ENCODE measurements at regions of chr9 and their contacts with region 1.

Region 1: GRCh38 chr9:69549310-69550202 is 122.6 kb downstream of the APBA1 start:
- DNase-seq: no peak
- ATAC-seq: no peak
- H3K4me3 Mint-ChIP-seq: no peak overlapping the region
- H3K27ac Mint-ChIP-seq: no peak overlapping the region
- H3K4me1 Mint-ChIP-seq: no peaks in the 10 kb centered on the region
- H3K27me3 Mint-ChIP-seq: peaks cover 6% of the 10 kb centered on the region
- CTCF ChIP-seq: peak; percentile 82

Region 2: DNA sequence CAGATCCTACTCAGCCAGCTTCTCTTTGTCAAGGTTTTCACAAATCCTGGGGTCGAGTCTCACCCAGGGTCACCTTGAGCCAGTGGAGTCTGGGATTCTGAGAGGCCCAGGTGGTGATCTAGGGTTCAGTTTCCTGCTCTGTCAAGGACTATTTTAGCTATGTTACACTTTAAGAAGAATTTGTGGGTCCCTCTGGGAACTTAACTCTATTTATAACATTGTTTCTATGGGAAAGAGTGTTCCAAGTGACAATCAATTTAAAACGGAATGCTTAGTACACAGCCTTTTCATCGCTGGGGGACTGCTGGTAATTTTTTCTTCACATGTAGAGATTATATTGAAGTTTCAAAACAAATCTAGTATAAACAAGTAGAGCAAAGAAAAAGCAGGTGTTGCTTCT is 982.0 kb before region 1 on chr9:
- CTCF ChIA-PET with region 1: no interaction called
- POLR2A ChIA-PET with region 1: no interaction called
- intact Hi-C with region 1: loop called (anchors 5 kb)
- DNase-seq: no peak
- ATAC-seq: no peak
- H3K4me3 Mint-ChIP-seq: no peak overlapping the region
- H3K27ac Mint-ChIP-seq: no peak overlapping the region
- H3K4me1 Mint-ChIP-seq: peaks cover 5% of the 10 kb centered on the region
- H3K27me3 Mint-ChIP-seq: peaks cover 6% of the 10 kb centered on the region
- CTCF ChIP-seq: no peak

Region 3: GRCh38 chr9:68974431-68974830 is 575.1 kb before region 1 on chr9:
- CTCF ChIA-PET with region 1: no interaction called
- POLR2A ChIA-PET with region 1: no interaction called
- intact Hi-C with region 1: no loop called
- DNase-seq: no peak
- ATAC-seq: peak; percentile 46
- H3K4me3 Mint-ChIP-seq: no peak overlapping the region
- H3K27ac Mint-ChIP-seq: no peak overlapping the region
- H3K4me1 Mint-ChIP-seq: peaks cover 50% of the 10 kb centered on the region
- H3K27me3 Mint-ChIP-seq: no peaks in the 10 kb centered on the region
- CTCF ChIP-seq: no peak

Region 4: GRCh38 chr9:69502671-69503301 is 46.8 kb before region 1 on chr9:
- CTCF ChIA-PET with region 1: no interaction called
- POLR2A ChIA-PET with region 1: no interaction called
- intact Hi-C with region 1: loop called (anchors 5 kb)
- DNase-seq: no peak
- ATAC-seq: no peak
- H3K4me3 Mint-ChIP-seq: no peak overlapping the region
- H3K27ac Mint-ChIP-seq: no peak overlapping the region
- H3K4me1 Mint-ChIP-seq: no peaks in the 10 kb centered on the region
- H3K27me3 Mint-ChIP-seq: no peaks in the 10 kb centered on the region
- CTCF ChIP-seq: no peak

Region 5: GRCh38 chr9:69748304-69748703 is 198.7 kb after region 1 on chr9:
- CTCF ChIA-PET with region 1: no interaction called
- POLR2A ChIA-PET with region 1: no interaction called
- intact Hi-C with region 1: no loop called
- DNase-seq: no peak
- ATAC-seq: no peak
- H3K4me3 Mint-ChIP-seq: no peak overlapping the region
- H3K27ac Mint-ChIP-seq: no peak overlapping the region
- H3K4me1 Mint-ChIP-seq: peaks cover 32% of the 10 kb centered on the region
- H3K27me3 Mint-ChIP-seq: no peaks in the 10 kb centered on the region
- CTCF ChIP-seq: no peak

Measured in activated B cell treated with CpG ODN at 0.5 μM for 24 hours (primary cell).